Cardiac septum (tissue), 1 donor: ENCODE measurements at regions of chr2 and their contacts with region 1.

Region 1: GRCh38 chr2:64767670-64768468 is 114.2 kb upstream of the SERTAD2 start:
- DNase-seq: peak; percentile 94

Region 2: DNA sequence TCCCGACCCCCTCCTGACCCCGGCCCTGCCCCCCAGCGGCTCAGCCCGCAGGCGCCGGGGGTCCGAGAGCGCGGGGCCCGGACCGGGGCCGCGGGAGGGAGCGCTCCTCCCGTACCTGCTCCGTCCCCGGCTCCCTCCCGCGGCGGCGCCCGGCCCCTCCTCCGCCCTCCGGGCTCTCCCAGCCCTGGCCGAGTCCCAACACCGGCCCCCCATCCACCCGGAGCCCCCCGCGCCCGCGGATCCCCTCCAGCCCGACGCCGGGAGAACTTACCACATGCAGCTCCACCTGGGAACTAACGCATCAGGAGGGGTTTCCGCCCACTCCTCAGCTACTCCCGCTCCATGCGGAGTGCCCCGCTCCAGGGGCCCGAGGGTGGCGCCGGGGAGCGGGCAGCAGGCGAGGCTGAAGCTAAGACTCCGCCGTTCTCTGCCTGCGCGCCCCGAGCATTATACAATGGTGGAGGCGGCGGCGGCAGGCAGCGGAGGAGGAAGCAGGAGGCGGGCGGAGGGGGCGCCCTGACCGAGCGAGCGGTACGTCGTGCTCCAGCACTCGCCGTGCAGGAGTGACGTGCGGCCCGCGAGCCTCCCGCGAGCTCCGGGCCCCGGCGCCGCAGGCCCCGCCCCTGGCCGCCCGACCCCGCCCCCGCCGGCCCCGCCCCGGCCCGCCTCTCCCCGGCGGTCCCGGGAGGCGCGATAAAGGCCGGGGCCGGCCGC is 114.4 kb before region 1 on chr2 and contains the start of gene SERTAD2:
- intact Hi-C with region 1: loop called (anchors 2 kb)
- DNase-seq: peak; percentile 94
- total RNA-seq, gene SERTAD2: 22.8 TPM

Region 3: GRCh38 chr2:64825831-64826491 is 58.1 kb after region 1 on chr2:
- intact Hi-C with region 1: loop called (anchors 5 kb)
- DNase-seq: no peak